IMR-90 (cell line): ENCODE measurements at regions of chr12 and their contacts with region 1.

Region 1: GRCh38 chr12:64688715-64689114 is 70.5 kb downstream of the GNS start:
- DNase-seq: no peak
- ATAC-seq: no peak
- H3K4me3 ChIP-seq: no peak overlapping the region
- H3K27ac ChIP-seq: no peak overlapping the region
- H3K4me1 ChIP-seq: peaks cover 9% of the 10 kb centered on the region
- H3K27me3 ChIP-seq: no peaks in the 10 kb centered on the region
- CTCF ChIP-seq: no peak
- POLR2A ChIP-seq: no peak
- RAD21 ChIP-seq: no peak

Region 2: DNA sequence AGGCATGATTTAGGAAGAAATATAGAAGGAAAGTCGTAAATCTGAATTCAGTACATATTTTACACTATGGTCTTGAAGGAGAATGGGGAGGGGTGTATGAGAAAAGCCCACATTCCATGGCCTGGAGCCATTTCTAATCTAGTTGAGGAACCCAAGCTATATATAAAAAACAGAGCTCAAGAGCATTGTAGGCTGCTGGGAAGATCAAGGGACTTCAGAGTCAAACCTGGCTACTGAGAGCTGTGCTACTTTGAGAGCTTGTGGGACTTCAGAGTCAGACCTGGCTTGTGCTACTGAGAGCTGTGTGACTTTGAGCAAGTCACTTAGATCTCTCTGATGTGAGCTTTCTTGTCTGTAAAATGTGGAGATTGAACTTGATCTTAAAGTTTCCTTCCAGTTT is 178.0 kb before region 1 on chr12:
- CTCF ChIA-PET with region 1: no interaction called
- POLR2A ChIA-PET with region 1: no interaction called
- dilution Hi-C with region 1: no loop called
- in situ Hi-C with region 1: no loop called
- intact Hi-C with region 1: no loop called
- DNase-seq: no peak
- ATAC-seq: no peak
- H3K4me3 ChIP-seq: no peak overlapping the region
- H3K27ac ChIP-seq: no peak overlapping the region
- H3K4me1 ChIP-seq: no peaks in the 10 kb centered on the region
- H3K27me3 ChIP-seq: no peaks in the 10 kb centered on the region
- CTCF ChIP-seq: no peak
- POLR2A ChIP-seq: no peak
- RAD21 ChIP-seq: no peak

Region 3: DNA sequence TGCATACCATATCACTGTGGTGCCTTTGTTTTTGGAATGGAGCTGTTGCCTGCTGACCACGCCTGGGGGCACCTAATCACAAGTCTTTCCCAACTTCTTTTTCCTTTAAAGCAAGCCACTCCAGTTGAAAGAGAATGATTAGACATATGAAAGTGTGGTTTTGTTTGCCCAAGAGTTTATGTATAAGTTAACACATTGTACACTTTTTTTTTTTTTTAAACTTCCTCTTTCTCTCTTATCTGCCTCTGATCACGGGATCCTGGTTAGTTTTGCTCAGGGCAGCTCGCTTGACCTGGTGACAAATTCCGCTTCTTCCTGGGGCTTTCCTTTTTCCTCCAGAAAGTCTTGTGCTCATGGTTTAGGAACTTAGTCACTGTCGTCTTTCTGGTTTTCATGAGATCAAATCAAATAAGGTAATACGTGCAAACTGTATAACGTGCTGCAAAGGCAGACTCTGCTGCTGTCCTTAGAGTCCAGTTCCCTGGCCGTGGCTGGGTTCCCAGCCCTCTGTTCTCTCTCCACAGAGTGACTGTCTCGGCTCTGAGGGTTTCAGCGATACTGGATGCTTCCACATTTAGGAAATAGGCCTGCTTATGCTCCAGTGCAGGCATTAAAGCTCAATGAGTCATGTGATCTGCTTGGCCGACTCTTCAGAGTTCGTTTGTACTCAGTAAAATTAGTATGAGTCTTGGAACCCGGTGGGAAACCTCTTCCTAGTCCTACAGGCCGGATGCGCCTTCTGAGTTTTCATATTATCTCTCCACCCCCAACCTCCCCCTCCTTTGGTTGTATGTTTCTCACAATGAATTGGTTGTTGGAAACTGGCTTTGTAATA is 63.3 kb before region 1 on chr12:
- CTCF ChIA-PET with region 1: no interaction called
- POLR2A ChIA-PET with region 1: interaction called, 11 read pairs
- dilution Hi-C with region 1: no loop called
- in situ Hi-C with region 1: no loop called
- intact Hi-C with region 1: no loop called
- DNase-seq: peak; percentile 94
- ATAC-seq: peak; percentile 60
- H3K4me3 ChIP-seq: peak overlapping the region; percentile 27
- H3K27ac ChIP-seq: peak overlapping the region; percentile 85
- H3K4me1 ChIP-seq: peaks cover 29% of the 10 kb centered on the region
- H3K27me3 ChIP-seq: no peaks in the 10 kb centered on the region
- CTCF ChIP-seq: peak; percentile 9; the same call in 1 of the 2 replicates
- POLR2A ChIP-seq: peak; percentile 62
- RAD21 ChIP-seq: no peak

Region 4: DNA sequence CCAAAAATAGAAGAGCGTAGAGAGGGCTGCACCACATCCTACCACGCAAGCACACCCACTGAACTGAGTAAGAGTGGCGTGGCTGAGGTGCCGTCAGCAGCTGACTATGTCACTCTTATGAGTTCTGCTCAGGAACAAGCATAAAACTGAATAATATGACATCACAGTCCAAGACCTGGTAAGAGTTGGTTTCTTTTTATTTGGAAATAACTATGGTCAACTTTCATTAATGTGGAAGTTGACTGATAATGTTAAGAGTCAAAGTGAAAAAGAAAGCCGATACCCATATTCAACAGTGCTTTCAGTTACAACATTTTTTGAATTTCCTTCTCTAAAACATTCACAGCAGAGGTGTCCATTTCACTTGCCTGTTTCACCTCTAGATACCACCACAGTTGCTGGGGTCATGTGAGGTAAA is 25.8 kb after region 1 on chr12:
- CTCF ChIA-PET with region 1: no interaction called
- POLR2A ChIA-PET with region 1: no interaction called
- dilution Hi-C with region 1: no loop called
- in situ Hi-C with region 1: no loop called
- intact Hi-C with region 1: no loop called
- DNase-seq: no peak
- ATAC-seq: no peak
- H3K4me3 ChIP-seq: no peak overlapping the region
- H3K27ac ChIP-seq: no peak overlapping the region
- H3K4me1 ChIP-seq: no peaks in the 10 kb centered on the region
- H3K27me3 ChIP-seq: no peaks in the 10 kb centered on the region
- CTCF ChIP-seq: no peak
- POLR2A ChIP-seq: no peak
- RAD21 ChIP-seq: no peak

Region 5: GRCh38 chr12:64983771-64984278 is 295.1 kb after region 1 on chr12:
- CTCF ChIA-PET with region 1: no interaction called
- POLR2A ChIA-PET with region 1: no interaction called
- dilution Hi-C with region 1: no loop called
- in situ Hi-C with region 1: no loop called
- intact Hi-C with region 1: no loop called
- DNase-seq: no peak
- ATAC-seq: no peak
- H3K4me3 ChIP-seq: no peak overlapping the region
- H3K27ac ChIP-seq: no peak overlapping the region
- H3K4me1 ChIP-seq: no peaks in the 10 kb centered on the region
- H3K27me3 ChIP-seq: no peaks in the 10 kb centered on the region
- CTCF ChIP-seq: no peak
- POLR2A ChIP-seq: no peak
- RAD21 ChIP-seq: no peak